ENCODE measurements at regions of chr5 and their contacts with region 1.

Region 1: DNA sequence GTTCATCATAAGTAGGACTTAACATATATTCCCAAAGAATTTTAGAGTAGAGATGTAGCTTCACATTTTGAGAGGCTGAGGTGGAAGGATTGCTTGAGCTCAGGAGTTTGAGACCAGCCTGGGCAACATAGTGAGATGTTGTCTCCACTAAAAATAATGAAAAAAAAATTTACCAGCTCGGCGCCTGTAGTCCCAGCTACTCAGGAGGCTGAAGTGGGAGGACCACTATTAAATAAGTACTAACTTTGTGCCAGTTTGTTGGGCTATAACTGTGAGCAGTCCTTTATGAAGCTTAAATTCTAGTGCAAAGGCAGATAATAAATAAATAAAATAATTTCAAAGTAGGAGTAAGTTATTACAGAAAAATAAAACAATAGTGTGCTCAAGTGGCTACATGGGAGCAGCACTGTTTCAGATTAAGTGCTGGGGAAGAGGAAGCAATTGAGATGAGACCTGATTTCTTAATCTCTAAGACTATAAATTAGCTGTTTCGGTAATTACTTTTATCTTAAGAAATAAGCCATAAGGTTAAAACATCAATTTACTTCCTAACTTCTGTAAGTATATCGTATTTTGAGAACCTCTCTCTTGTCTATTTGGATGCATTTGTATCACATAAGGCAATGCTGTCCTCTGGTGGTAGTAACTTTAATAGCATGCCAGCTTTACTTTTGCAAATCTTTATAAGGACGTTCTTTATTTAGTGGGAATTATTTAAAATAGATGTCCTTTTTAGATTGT is 98.9 kb downstream of the CSNK1G3 start:
- DNase-seq: peak in 7 of 9 donors; percentile 22 to 62 (median 45)
- ATAC-seq: peak; percentile 85
- H3K4me3 ChIP-seq: no peak overlapping the region
- H3K4me3 Mint-ChIP-seq: no peak overlapping the region
- H3K27ac ChIP-seq: no peak overlapping the region
- H3K27ac Mint-ChIP-seq: peak overlapping the region in 5 of 9 donors; percentile 2 to 79 (median 36)
- H3K4me1 ChIP-seq: no peaks in the 10 kb centered on the region
- H3K4me1 Mint-ChIP-seq: peaks cover 0 to 9% (median 0%) of the 10 kb centered on the region in 7 donors
- H3K27me3 ChIP-seq: no peaks in the 10 kb centered on the region
- H3K27me3 Mint-ChIP-seq: no peaks in the 10 kb centered on the region

Region 2: DNA sequence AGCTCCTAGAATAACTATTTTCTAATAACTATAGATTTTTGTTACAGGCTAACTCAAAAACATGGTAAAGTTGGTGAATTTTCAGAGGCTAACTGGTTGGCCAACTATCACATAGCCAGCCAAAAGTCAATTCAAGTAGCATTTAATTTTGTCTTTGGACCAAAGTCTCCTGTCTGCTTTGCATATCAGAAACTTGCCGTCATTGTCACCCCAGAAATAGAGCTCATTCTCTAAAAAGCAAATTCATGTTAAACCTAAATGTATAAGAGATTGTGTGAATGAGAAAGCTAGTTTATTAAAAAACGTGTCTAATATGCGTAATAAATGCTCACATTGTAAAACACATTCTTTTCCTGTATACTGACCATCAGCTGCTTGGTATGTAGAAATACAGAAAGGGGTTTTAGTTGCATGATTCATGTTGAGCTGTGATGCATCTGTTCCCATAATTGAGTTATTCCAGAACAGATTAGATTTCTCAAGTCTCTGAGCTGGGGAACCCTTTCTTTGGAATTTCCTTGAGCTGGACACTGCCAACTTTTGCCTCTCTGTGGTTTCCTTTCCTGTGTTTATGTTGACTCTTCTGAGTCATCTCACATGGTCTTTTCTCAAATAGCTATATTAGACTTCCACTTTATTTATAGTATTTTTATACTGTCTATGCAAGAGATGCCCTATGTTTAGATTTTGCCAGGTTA is 1641.8 kb before region 1 on chr5:
- CTCF ChIA-PET with region 1: no interaction called
- POLR2A ChIA-PET with region 1: no interaction called
- intact Hi-C with region 1: loop called in 1 of 2 experiments (anchors 2 kb)
- DNase-seq: no peak
- ATAC-seq: no peak
- H3K4me3 ChIP-seq: no peak overlapping the region
- H3K4me3 Mint-ChIP-seq: no peak overlapping the region
- H3K27ac ChIP-seq: no peak overlapping the region
- H3K27ac Mint-ChIP-seq: peak overlapping the region in 1 of 9 donors; percentile 27
- H3K4me1 ChIP-seq: no peaks in the 10 kb centered on the region
- H3K4me1 Mint-ChIP-seq: peaks cover 12 to 43% (median 40%) of the 10 kb centered on the region in 7 donors
- H3K27me3 ChIP-seq: no peaks in the 10 kb centered on the region
- H3K27me3 Mint-ChIP-seq: no peaks in the 10 kb centered on the region

Region 3: GRCh38 chr5:122704243-122705036 is 906.4 kb before region 1 on chr5:
- CTCF ChIA-PET with region 1: interaction called, 4 read pairs
- POLR2A ChIA-PET with region 1: no interaction called
- intact Hi-C with region 1: loop called (anchors 1 to 5 kb)
- DNase-seq: peak in 5 of 9 donors; percentile 4 to 13 (median 7)
- ATAC-seq: peak; percentile 41
- H3K4me3 ChIP-seq: no peak overlapping the region
- H3K4me3 Mint-ChIP-seq: no peak overlapping the region
- H3K27ac ChIP-seq: no peak overlapping the region
- H3K27ac Mint-ChIP-seq: no peak overlapping the region
- H3K4me1 ChIP-seq: no peaks in the 10 kb centered on the region
- H3K4me1 Mint-ChIP-seq: no peaks in the 10 kb centered on the region
- H3K27me3 ChIP-seq: no peaks in the 10 kb centered on the region
- H3K27me3 Mint-ChIP-seq: peaks cover 0 to 13% (median 5%) of the 10 kb centered on the region in 5 donors

Region 4: DNA sequence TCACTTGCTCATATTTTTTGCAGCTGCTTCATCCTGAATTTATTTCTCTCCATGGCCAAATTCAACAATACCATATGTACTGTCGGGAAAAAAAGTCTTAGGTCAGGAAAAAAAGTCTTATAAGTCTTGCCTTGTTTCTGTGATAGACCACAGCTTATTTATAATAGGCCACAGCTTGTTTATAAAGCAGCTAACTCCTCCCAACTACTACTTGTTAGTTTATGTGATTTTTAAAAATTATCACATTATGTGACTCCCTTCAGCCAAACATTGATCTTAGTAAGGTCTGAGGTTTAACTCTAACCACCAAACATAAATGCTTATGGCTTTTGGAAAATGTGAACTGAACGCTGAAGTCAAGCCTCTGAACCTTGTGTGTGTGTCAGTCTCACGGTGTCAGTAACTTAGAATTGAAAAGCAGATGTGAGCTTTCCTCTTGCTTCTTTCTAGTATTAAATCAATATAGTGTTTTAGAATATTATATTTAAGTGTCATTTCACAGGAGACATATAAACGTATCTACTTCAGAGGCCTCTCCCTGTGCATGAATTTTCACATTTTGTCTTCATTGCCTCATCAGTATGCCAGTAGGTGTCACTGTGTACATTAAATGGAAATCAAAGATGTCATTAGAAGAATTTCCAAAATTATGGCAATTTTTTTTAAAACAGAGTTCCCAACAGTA is 714.1 kb before region 1 on chr5:
- CTCF ChIA-PET with region 1: no interaction called
- POLR2A ChIA-PET with region 1: no interaction called
- intact Hi-C with region 1: loop called (anchors 1 to 2 kb)
- DNase-seq: no peak
- ATAC-seq: no peak
- H3K4me3 ChIP-seq: no peak overlapping the region
- H3K4me3 Mint-ChIP-seq: no peak overlapping the region
- H3K27ac ChIP-seq: no peak overlapping the region
- H3K27ac Mint-ChIP-seq: no peak overlapping the region
- H3K4me1 ChIP-seq: peaks cover 0 to 3% of the 10 kb centered on the region in 2 donors
- H3K4me1 Mint-ChIP-seq: peaks cover 0 to 3% (median 0%) of the 10 kb centered on the region in 7 donors
- H3K27me3 ChIP-seq: peaks cover 0 to 4% of the 10 kb centered on the region in 2 donors
- H3K27me3 Mint-ChIP-seq: peaks cover 0 to 2% (median 0%) of the 10 kb centered on the region in 5 donors

Region 5: GRCh38 chr5:123132316-123132715 is 478.5 kb before region 1 on chr5:
- CTCF ChIA-PET with region 1: no interaction called
- POLR2A ChIA-PET with region 1: no interaction called
- intact Hi-C with region 1: loop called in 1 of 2 experiments (anchors 5 kb)
- DNase-seq: no peak
- ATAC-seq: no peak
- H3K4me3 ChIP-seq: no peak overlapping the region
- H3K4me3 Mint-ChIP-seq: no peak overlapping the region
- H3K27ac ChIP-seq: no peak overlapping the region
- H3K27ac Mint-ChIP-seq: no peak overlapping the region
- H3K4me1 ChIP-seq: no peaks in the 10 kb centered on the region
- H3K4me1 Mint-ChIP-seq: no peaks in the 10 kb centered on the region
- H3K27me3 ChIP-seq: peaks cover 5% of the 10 kb centered on the region in 2 donors
- H3K27me3 Mint-ChIP-seq: peaks cover 14 to 40% (median 39%) of the 10 kb centered on the region in 5 donors

Region 6: GRCh38 chr5:123371575-123372179 is 239.2 kb before region 1 on chr5:
- CTCF ChIA-PET with region 1: interaction called, 5 read pairs
- POLR2A ChIA-PET with region 1: no interaction called
- intact Hi-C with region 1: loop called (anchors 1 to 2 kb)
- DNase-seq: no peak
- ATAC-seq: no peak
- H3K4me3 ChIP-seq: no peak overlapping the region
- H3K4me3 Mint-ChIP-seq: no peak overlapping the region
- H3K27ac ChIP-seq: no peak overlapping the region
- H3K27ac Mint-ChIP-seq: peak overlapping the region in 1 of 9 donors; percentile 7
- H3K4me1 ChIP-seq: no peaks in the 10 kb centered on the region
- H3K4me1 Mint-ChIP-seq: peaks cover 0 to 27% (median 2%) of the 10 kb centered on the region in 7 donors
- H3K27me3 ChIP-seq: no peaks in the 10 kb centered on the region
- H3K27me3 Mint-ChIP-seq: no peaks in the 10 kb centered on the region

Region 7: DNA sequence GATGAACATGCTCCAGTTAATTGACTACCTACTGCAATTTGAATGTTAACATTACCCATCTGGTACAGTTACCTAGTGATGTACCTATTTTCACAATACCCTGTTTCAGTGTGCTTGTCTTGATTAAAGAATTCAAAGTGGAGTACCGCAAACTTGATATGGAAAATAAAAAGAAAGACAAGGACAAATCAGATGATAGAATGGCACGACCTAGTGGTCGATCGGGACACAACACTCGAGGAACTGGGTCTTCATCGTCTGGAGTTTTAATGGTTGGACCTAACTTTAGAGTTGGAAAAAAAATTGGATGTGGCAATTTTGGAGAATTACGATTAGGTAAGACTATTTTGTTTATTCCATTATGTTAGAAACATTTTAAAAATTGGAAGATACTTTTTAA is 65.3 kb before region 1 on chr5:
- CTCF ChIA-PET with region 1: interaction called, 3 read pairs
- POLR2A ChIA-PET with region 1: no interaction called
- intact Hi-C with region 1: loop called in 1 of 2 experiments (anchors 2 kb)
- DNase-seq: peak in 7 of 9 donors; percentile 2 to 27 (median 9)
- ATAC-seq: no peak
- H3K4me3 ChIP-seq: no peak overlapping the region
- H3K4me3 Mint-ChIP-seq: no peak overlapping the region
- H3K27ac ChIP-seq: no peak overlapping the region
- H3K27ac Mint-ChIP-seq: no peak overlapping the region
- H3K4me1 ChIP-seq: peaks cover 9 to 19% of the 10 kb centered on the region in 2 donors
- H3K4me1 Mint-ChIP-seq: peaks cover 35 to 79% (median 56%) of the 10 kb centered on the region in 7 donors
- H3K27me3 ChIP-seq: no peaks in the 10 kb centered on the region
- H3K27me3 Mint-ChIP-seq: no peaks in the 10 kb centered on the region

Measured in naive thymus-derived CD4-positive, alpha-beta T cell (primary cell).